ENCODE measurements at regions of chr1 and their contacts with region 1.

Region 1: GRCh38 chr1:207963427-207964194 is 52.7 kb upstream of the CD34 start:
- DNase-seq: no peak
- ATAC-seq: peak; percentile 93
- H3K4me3 ChIP-seq: peak overlapping the region; percentile 52 to 75
- H3K27ac ChIP-seq: peak overlapping the region; percentile 72
- H3K4me1 ChIP-seq: no peaks in the 10 kb centered on the region
- H3K27me3 ChIP-seq: no peaks in the 10 kb centered on the region
- CTCF ChIP-seq: peak; percentile 98

Region 2: GRCh38 chr1:207828485-207829158 is 135.0 kb before region 1 on chr1:
- CTCF ChIA-PET with region 1: interaction called, 4 read pairs
- POLR2A ChIA-PET with region 1: no interaction called
- in situ Hi-C with region 1: no loop called
- intact Hi-C with region 1: loop called (anchors 2 kb)
- DNase-seq: peak; percentile 80
- ATAC-seq: peak; percentile 86
- H3K4me3 ChIP-seq: no peak overlapping the region
- H3K27ac ChIP-seq: no peak overlapping the region
- H3K4me1 ChIP-seq: peaks cover 33% of the 10 kb centered on the region
- H3K27me3 ChIP-seq: no peaks in the 10 kb centered on the region
- CTCF ChIP-seq: peak; percentile 91

Region 3: GRCh38 chr1:207885129-207886032 is 78.2 kb before region 1 on chr1:
- CTCF ChIA-PET with region 1: interaction called, 25 read pairs
- POLR2A ChIA-PET with region 1: no interaction called
- in situ Hi-C with region 1: no loop called
- intact Hi-C with region 1: loop called (anchors 1 kb)
- DNase-seq: peak; percentile 43
- ATAC-seq: peak; percentile 97
- H3K4me3 ChIP-seq: no peak overlapping the region
- H3K27ac ChIP-seq: no peak overlapping the region
- H3K4me1 ChIP-seq: no peaks in the 10 kb centered on the region
- H3K27me3 ChIP-seq: no peaks in the 10 kb centered on the region; the same call in 1 of the 2 replicates
- CTCF ChIP-seq: peak; percentile 95

Region 4: GRCh38 chr1:207897188-207897587 is 66.4 kb before region 1 on chr1:
- CTCF ChIA-PET with region 1: interaction called, 11 read pairs
- POLR2A ChIA-PET with region 1: interaction called, 5 read pairs
- in situ Hi-C with region 1: no loop called
- intact Hi-C with region 1: no loop called
- DNase-seq: no peak
- ATAC-seq: no peak
- H3K4me3 ChIP-seq: no peak overlapping the region
- H3K27ac ChIP-seq: no peak overlapping the region
- H3K4me1 ChIP-seq: no peaks in the 10 kb centered on the region
- H3K27me3 ChIP-seq: no peaks in the 10 kb centered on the region
- CTCF ChIP-seq: peak; percentile 48

Region 5: GRCh38 chr1:207952617-207953542 is 10.7 kb before region 1 on chr1:
- CTCF ChIA-PET with region 1: interaction called, 14 read pairs
- POLR2A ChIA-PET with region 1: no interaction called
- in situ Hi-C with region 1: no loop called
- intact Hi-C with region 1: no loop called
- DNase-seq: no peak
- ATAC-seq: no peak
- H3K4me3 ChIP-seq: no peak overlapping the region
- H3K27ac ChIP-seq: no peak overlapping the region
- H3K4me1 ChIP-seq: no peaks in the 10 kb centered on the region
- H3K27me3 ChIP-seq: 0 out of 2 replicates have a peak, but pooled peaks cover 4% of the 10 kb centered on the region
- CTCF ChIP-seq: no peak